CD4-positive, alpha-beta T cell (primary cell): ENCODE measurements at regions of chr17 and their contacts with region 1.

Region 1: GRCh38 chr17:72725433-72726068 is 366.9 kb downstream of the SLC39A11 start:
- DNase-seq: peak; percentile 14 to 72 (median 40)
- ATAC-seq: peak; percentile 42
- H3K4me3 ChIP-seq: no peak overlapping the region
- H3K4me3 Mint-ChIP-seq: peak overlapping the region; percentile 57
- H3K27ac ChIP-seq: no peak overlapping the region
- H3K27ac Mint-ChIP-seq: peak overlapping the region; percentile 75
- H3K4me1 ChIP-seq: peaks cover 32% of the 10 kb centered on the region
- H3K4me1 Mint-ChIP-seq: peaks cover 31% of the 10 kb centered on the region
- H3K27me3 ChIP-seq: no peaks in the 10 kb centered on the region
- H3K27me3 Mint-ChIP-seq: no peaks in the 10 kb centered on the region
- CTCF ChIP-seq: peak; percentile 90

Region 2: GRCh38 chr17:72764632-72765041 is 39.1 kb after region 1 on chr17:
- CTCF ChIA-PET with region 1: no interaction called
- POLR2A ChIA-PET with region 1: no interaction called
- intact Hi-C with region 1: no loop called
- DNase-seq: no peak
- ATAC-seq: no peak
- H3K4me3 ChIP-seq: no peak overlapping the region
- H3K4me3 Mint-ChIP-seq: no peak overlapping the region
- H3K27ac ChIP-seq: no peak overlapping the region
- H3K27ac Mint-ChIP-seq: no peak overlapping the region
- H3K4me1 ChIP-seq: no peaks in the 10 kb centered on the region
- H3K4me1 Mint-ChIP-seq: no peaks in the 10 kb centered on the region
- H3K27me3 ChIP-seq: no peaks in the 10 kb centered on the region
- H3K27me3 Mint-ChIP-seq: no peaks in the 10 kb centered on the region
- CTCF ChIP-seq: no peak

Region 3: GRCh38 chr17:72985881-72986720 is 260.6 kb after region 1 on chr17:
- CTCF ChIA-PET with region 1: interaction called, 3 read pairs
- POLR2A ChIA-PET with region 1: interaction called, 3 read pairs
- intact Hi-C with region 1: loop called (anchors 5 kb)
- DNase-seq: peak; percentile 7 to 72 (median 34)
- ATAC-seq: peak; percentile 41
- H3K4me3 ChIP-seq: no peak overlapping the region
- H3K4me3 Mint-ChIP-seq: no peak overlapping the region
- H3K27ac ChIP-seq: no peak overlapping the region
- H3K27ac Mint-ChIP-seq: no peak overlapping the region
- H3K4me1 ChIP-seq: peaks cover 6% of the 10 kb centered on the region
- H3K4me1 Mint-ChIP-seq: peaks cover 6% of the 10 kb centered on the region
- H3K27me3 ChIP-seq: no peaks in the 10 kb centered on the region
- H3K27me3 Mint-ChIP-seq: no peaks in the 10 kb centered on the region
- CTCF ChIP-seq: peak; percentile 78

Region 4: GRCh38 chr17:73192894-73193701 is 467.5 kb after region 1 on chr17 and contains the start of gene COG1:
- CTCF ChIA-PET with region 1: interaction called, 5 read pairs
- POLR2A ChIA-PET with region 1: interaction called, 5 read pairs
- intact Hi-C with region 1: loop called in 1 of 2 experiments (anchors 10 kb)
- DNase-seq: peak; percentile 63 to 95 (median 84)
- ATAC-seq: peak; percentile 84
- H3K4me3 ChIP-seq: peak within 1 kb of the TSS; percentile 89
- H3K4me3 Mint-ChIP-seq: peak within 1 kb of the TSS; percentile 99
- H3K27ac ChIP-seq: peak within 1 kb of the TSS; percentile 60 to 75
- H3K27ac Mint-ChIP-seq: peak within 1 kb of the TSS; percentile 89
- H3K4me1 ChIP-seq: peaks cover 28% of the 10 kb centered on the region
- H3K4me1 Mint-ChIP-seq: peaks cover 33% of the 10 kb centered on the region
- H3K27me3 ChIP-seq: no peaks in the 10 kb centered on the region
- H3K27me3 Mint-ChIP-seq: no peaks in the 10 kb centered on the region
- CTCF ChIP-seq: no peak
- total RNA-seq, gene COG1: 83.0 to 86.2 TPM

Region 5: GRCh38 chr17:73371285-73371684 is 645.7 kb after region 1 on chr17:
- CTCF ChIA-PET with region 1: interaction called, 39 read pairs
- POLR2A ChIA-PET with region 1: interaction called, 4 read pairs
- intact Hi-C with region 1: loop called (anchors 1 kb)
- DNase-seq: no peak
- ATAC-seq: no peak
- H3K4me3 ChIP-seq: no peak overlapping the region
- H3K4me3 Mint-ChIP-seq: no peak overlapping the region
- H3K27ac ChIP-seq: no peak overlapping the region
- H3K27ac Mint-ChIP-seq: no peak overlapping the region
- H3K4me1 ChIP-seq: no peaks in the 10 kb centered on the region
- H3K4me1 Mint-ChIP-seq: no peaks in the 10 kb centered on the region
- H3K27me3 ChIP-seq: no peaks in the 10 kb centered on the region
- H3K27me3 Mint-ChIP-seq: no peaks in the 10 kb centered on the region
- CTCF ChIP-seq: no peak

Region 6: DNA sequence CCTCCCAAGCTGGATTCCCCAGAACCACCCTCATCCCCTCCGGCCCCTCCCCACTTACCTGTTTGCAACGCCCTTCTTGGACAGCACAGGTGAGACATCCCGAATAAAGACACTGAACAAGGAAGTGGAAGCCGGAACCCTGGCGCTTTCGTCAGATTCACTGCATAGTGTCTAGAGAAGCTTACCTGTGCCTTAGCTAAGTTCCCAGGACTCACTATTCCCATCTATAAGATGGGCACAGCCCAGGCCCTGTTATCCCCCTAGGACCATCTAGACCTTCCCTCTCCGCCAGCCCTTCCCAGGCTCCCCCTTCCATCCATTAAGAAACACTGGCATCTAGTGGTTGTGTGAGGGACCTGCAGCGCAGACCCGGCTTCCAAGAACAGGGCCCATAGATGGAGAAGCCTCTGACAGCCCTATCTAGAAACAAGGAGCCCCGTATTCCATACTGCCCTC is 1451.0 kb after region 1 on chr17:
- CTCF ChIA-PET with region 1: no interaction called
- POLR2A ChIA-PET with region 1: no interaction called
- intact Hi-C with region 1: loop called in 1 of 2 experiments (anchors 10 kb)
- DNase-seq: peak in 10 of 14 experiments; percentile 8 to 54 (median 32)
- ATAC-seq: peak; percentile 70
- H3K4me3 ChIP-seq: no peak overlapping the region
- H3K4me3 Mint-ChIP-seq: no peak overlapping the region
- H3K27ac ChIP-seq: no peak overlapping the region
- H3K27ac Mint-ChIP-seq: no peak overlapping the region
- H3K4me1 ChIP-seq: no peaks in the 10 kb centered on the region
- H3K4me1 Mint-ChIP-seq: no peaks in the 10 kb centered on the region
- H3K27me3 ChIP-seq: peaks cover 8 to 20% of the 10 kb centered on the region in 2 experiments
- H3K27me3 Mint-ChIP-seq: peaks cover 55% of the 10 kb centered on the region
- CTCF ChIP-seq: peak; percentile 52